CD4-positive, alpha-beta memory T cell (primary cell): ENCODE measurements at regions of chr4 and their contacts with region 1.

Region 1: DNA sequence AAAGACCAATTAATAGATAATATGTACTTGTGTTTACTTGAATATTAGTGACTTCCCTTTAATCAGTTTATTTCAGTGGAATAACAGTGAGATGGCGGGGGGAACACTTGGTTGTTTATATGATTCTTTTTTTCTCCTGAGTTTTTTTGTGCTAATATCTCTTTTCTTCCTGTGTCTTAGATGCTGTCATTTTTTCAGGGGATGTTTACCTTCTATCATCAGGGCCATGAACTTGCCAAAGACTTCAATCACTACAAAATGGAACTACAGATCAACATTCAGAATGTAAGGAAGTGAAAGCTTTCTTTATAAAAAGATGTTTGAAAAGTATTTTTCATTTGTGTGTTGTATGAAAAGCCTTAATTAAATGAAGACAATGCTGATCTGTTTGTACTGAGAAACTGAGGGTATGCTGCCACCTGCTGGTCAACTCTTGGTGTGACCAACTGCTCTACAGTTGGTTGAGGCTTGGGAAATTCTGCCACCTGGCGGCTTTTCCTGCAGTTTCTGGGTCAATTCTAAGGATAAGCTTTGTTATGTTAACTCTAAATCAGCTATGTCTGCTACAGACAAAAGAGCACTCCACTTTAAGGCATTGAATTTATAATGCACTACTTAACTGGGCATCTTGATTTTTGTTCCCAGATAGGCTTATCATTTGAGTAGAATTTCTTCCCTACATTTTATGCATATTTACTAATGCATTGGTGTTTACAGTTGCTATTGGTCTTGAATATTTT is 134.8 kb downstream of the ARHGAP10 start:
- DNase-seq: peak; percentile 83 to 89 (median 85)
- H3K4me3 ChIP-seq: no peak overlapping the region
- H3K4me3 Mint-ChIP-seq: no peak overlapping the region
- H3K27ac ChIP-seq: no peak overlapping the region
- H3K27ac Mint-ChIP-seq: peak overlapping the region in 1 of 7 donors; percentile 43
- H3K4me1 ChIP-seq: no peaks in the 10 kb centered on the region
- H3K4me1 Mint-ChIP-seq: peaks cover 0 to 2% (median 0%) of the 10 kb centered on the region in 4 donors
- H3K27me3 ChIP-seq: no peaks in the 10 kb centered on the region
- H3K27me3 Mint-ChIP-seq: no peaks in the 10 kb centered on the region

Region 2: DNA sequence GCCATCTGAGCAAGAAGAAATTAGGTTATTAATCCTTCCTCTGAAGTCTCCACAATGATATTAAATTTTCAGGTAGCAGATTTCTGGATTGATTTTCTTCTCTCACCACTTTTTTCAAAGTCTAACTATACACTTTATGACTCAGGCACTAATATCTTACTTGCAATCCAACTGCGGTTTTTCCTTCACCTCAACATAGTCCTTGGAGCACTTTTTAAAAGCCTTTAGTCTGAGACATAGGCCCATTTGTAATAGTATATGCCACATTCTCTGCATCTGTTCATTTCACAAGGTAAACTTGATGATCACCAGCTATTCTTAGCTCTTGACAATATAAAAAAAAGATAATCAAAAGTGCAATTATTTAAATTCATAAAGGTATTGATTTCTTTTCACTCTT is 441.7 kb before region 1 on chr4:
- CTCF ChIA-PET with region 1: no interaction called
- POLR2A ChIA-PET with region 1: no interaction called
- intact Hi-C with region 1: no loop called
- DNase-seq: no peak
- H3K4me3 ChIP-seq: no peak overlapping the region
- H3K4me3 Mint-ChIP-seq: no peak overlapping the region
- H3K27ac ChIP-seq: no peak overlapping the region
- H3K27ac Mint-ChIP-seq: no peak overlapping the region
- H3K4me1 ChIP-seq: no peaks in the 10 kb centered on the region
- H3K4me1 Mint-ChIP-seq: no peaks in the 10 kb centered on the region
- H3K27me3 ChIP-seq: no peaks in the 10 kb centered on the region
- H3K27me3 Mint-ChIP-seq: no peaks in the 10 kb centered on the region

Region 3: DNA sequence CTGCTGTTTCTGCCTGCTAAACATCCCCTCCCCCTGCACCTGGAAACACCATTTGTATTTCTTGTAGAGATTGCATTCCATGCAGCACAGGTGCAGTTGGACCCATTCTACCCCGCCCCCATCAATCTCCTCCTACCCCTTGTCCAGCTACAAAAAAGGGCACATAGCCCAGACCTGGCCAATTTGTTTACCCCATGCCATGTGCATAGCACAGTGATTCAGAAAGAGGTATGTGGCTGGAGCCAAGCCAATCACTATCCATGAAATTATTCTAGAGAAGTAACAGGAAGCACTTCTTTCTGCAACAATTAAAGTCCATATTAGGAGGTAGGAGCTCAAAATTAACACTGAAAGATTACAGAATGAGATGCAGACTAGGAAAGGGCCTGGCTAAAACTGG is 269.7 kb before region 1 on chr4:
- CTCF ChIA-PET with region 1: interaction called, 10 read pairs
- POLR2A ChIA-PET with region 1: no interaction called
- intact Hi-C with region 1: loop called (anchors 1 kb)
- DNase-seq: no peak
- H3K4me3 ChIP-seq: no peak overlapping the region
- H3K4me3 Mint-ChIP-seq: no peak overlapping the region
- H3K27ac ChIP-seq: no peak overlapping the region
- H3K27ac Mint-ChIP-seq: no peak overlapping the region
- H3K4me1 ChIP-seq: no peaks in the 10 kb centered on the region
- H3K4me1 Mint-ChIP-seq: peaks cover 0 to 4% (median 1%) of the 10 kb centered on the region in 4 donors
- H3K27me3 ChIP-seq: no peaks in the 10 kb centered on the region
- H3K27me3 Mint-ChIP-seq: peaks cover 2 to 3% of the 10 kb centered on the region in 2 donors

Region 4: GRCh38 chr4:147693218-147693617 is 173.5 kb before region 1 on chr4:
- CTCF ChIA-PET with region 1: interaction called, 73 read pairs
- POLR2A ChIA-PET with region 1: no interaction called
- intact Hi-C with region 1: no loop called
- DNase-seq: no peak
- H3K4me3 ChIP-seq: no peak overlapping the region
- H3K4me3 Mint-ChIP-seq: no peak overlapping the region
- H3K27ac ChIP-seq: no peak overlapping the region
- H3K27ac Mint-ChIP-seq: no peak overlapping the region
- H3K4me1 ChIP-seq: no peaks in the 10 kb centered on the region
- H3K4me1 Mint-ChIP-seq: peaks cover 0 to 5% (median 3%) of the 10 kb centered on the region in 4 donors
- H3K27me3 ChIP-seq: no peaks in the 10 kb centered on the region
- H3K27me3 Mint-ChIP-seq: peaks cover 18 to 19% of the 10 kb centered on the region in 2 donors

Region 5: DNA sequence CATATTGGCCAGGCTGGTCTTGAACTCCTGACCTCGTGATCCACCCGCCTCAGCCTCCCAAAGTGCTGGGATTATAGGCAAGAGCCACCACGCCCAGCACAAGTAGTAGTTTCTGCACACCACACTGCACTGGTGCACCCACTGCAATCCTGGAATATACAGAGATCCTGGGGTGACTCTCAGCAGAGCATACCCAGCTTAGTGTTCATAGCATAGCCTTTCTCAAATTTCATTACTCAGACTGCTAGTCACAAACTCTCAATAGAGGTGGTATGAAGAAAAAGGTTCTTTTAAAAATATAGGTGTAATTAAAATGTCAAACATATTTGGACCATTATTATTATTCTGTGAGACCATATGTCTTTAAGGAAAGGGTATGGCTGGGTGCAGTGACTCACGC is 141.0 kb before region 1 on chr4:
- CTCF ChIA-PET with region 1: interaction called, 48 read pairs
- POLR2A ChIA-PET with region 1: no interaction called
- intact Hi-C with region 1: no loop called
- DNase-seq: no peak
- H3K4me3 ChIP-seq: no peak overlapping the region
- H3K4me3 Mint-ChIP-seq: no peak overlapping the region
- H3K27ac ChIP-seq: no peak overlapping the region
- H3K27ac Mint-ChIP-seq: no peak overlapping the region
- H3K4me1 ChIP-seq: peaks cover 1% of the 10 kb centered on the region
- H3K4me1 Mint-ChIP-seq: peaks cover 0 to 6% (median 4%) of the 10 kb centered on the region in 4 donors
- H3K27me3 ChIP-seq: no peaks in the 10 kb centered on the region
- H3K27me3 Mint-ChIP-seq: no peaks in the 10 kb centered on the region

Region 6: GRCh38 chr4:147816382-147817254 is 50.1 kb before region 1 on chr4:
- CTCF ChIA-PET with region 1: interaction called, 13 read pairs
- POLR2A ChIA-PET with region 1: no interaction called
- intact Hi-C with region 1: no loop called
- DNase-seq: no peak
- H3K4me3 ChIP-seq: no peak overlapping the region
- H3K4me3 Mint-ChIP-seq: peak overlapping the region in 1 of 8 donors; percentile 40
- H3K27ac ChIP-seq: no peak overlapping the region
- H3K27ac Mint-ChIP-seq: peak overlapping the region in 4 of 7 donors; percentile 3 to 79 (median 60)
- H3K4me1 ChIP-seq: peaks cover 13% of the 10 kb centered on the region
- H3K4me1 Mint-ChIP-seq: peaks cover 11 to 23% (median 17%) of the 10 kb centered on the region in 4 donors
- H3K27me3 ChIP-seq: no peaks in the 10 kb centered on the region
- H3K27me3 Mint-ChIP-seq: no peaks in the 10 kb centered on the region

Region 7: DNA sequence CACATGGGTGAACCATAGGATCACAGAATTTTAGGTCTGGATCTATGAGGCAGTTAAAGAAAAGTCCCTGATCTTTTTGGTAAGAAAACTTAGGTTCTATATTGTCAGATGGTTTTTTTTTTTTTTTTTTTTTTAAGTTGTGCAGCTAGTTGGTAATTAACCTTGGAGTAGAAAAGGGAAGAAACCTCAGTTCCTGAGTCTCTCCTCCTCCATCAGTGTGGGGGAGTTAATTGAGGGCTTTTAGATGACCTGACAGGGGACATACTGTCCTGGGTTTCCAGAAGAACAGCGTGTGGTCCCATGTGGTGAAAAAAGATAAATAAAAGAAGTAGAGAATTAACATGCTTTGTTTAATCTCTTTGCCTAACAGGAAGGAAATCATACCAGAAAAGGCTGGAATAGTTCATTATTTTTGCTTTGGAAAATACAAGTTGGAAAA is 11.1 kb before region 1 on chr4:
- CTCF ChIA-PET with region 1: interaction called, 41 read pairs
- POLR2A ChIA-PET with region 1: no interaction called
- intact Hi-C with region 1: no loop called
- DNase-seq: no peak
- H3K4me3 ChIP-seq: no peak overlapping the region
- H3K4me3 Mint-ChIP-seq: no peak overlapping the region
- H3K27ac ChIP-seq: no peak overlapping the region
- H3K27ac Mint-ChIP-seq: no peak overlapping the region
- H3K4me1 ChIP-seq: no peaks in the 10 kb centered on the region
- H3K4me1 Mint-ChIP-seq: no peaks in the 10 kb centered on the region
- H3K27me3 ChIP-seq: no peaks in the 10 kb centered on the region
- H3K27me3 Mint-ChIP-seq: no peaks in the 10 kb centered on the region

Region 8: GRCh38 chr4:147984065-147984777 is 117.5 kb after region 1 on chr4:
- CTCF ChIA-PET with region 1: no interaction called
- POLR2A ChIA-PET with region 1: no interaction called
- intact Hi-C with region 1: no loop called
- DNase-seq: peak in 4 of 5 donors; percentile 12 to 44 (median 34)
- H3K4me3 ChIP-seq: no peak overlapping the region
- H3K4me3 Mint-ChIP-seq: no peak overlapping the region
- H3K27ac ChIP-seq: no peak overlapping the region
- H3K27ac Mint-ChIP-seq: peak overlapping the region in 3 of 7 donors; percentile 33 to 85 (median 38)
- H3K4me1 ChIP-seq: no peaks in the 10 kb centered on the region
- H3K4me1 Mint-ChIP-seq: peaks cover 17 to 36% (median 23%) of the 10 kb centered on the region in 4 donors
- H3K27me3 ChIP-seq: no peaks in the 10 kb centered on the region
- H3K27me3 Mint-ChIP-seq: no peaks in the 10 kb centered on the region

Region 9: GRCh38 chr4:148355442-148356123 is 488.9 kb after region 1 on chr4:
- CTCF ChIA-PET with region 1: no interaction called
- POLR2A ChIA-PET with region 1: no interaction called
- intact Hi-C with region 1: no loop called
- DNase-seq: peak in 2 of 5 donors; percentile 4 to 11
- H3K4me3 ChIP-seq: peak overlapping the region in 1 of 2 donors; percentile 12
- H3K4me3 Mint-ChIP-seq: peak overlapping the region; percentile 41 to 80 (median 64)
- H3K27ac ChIP-seq: no peak overlapping the region
- H3K27ac Mint-ChIP-seq: peak overlapping the region; percentile 52 to 87 (median 77)
- H3K4me1 ChIP-seq: peaks cover 32% of the 10 kb centered on the region
- H3K4me1 Mint-ChIP-seq: peaks cover 26 to 54% (median 38%) of the 10 kb centered on the region in 4 donors
- H3K27me3 ChIP-seq: no peaks in the 10 kb centered on the region
- H3K27me3 Mint-ChIP-seq: no peaks in the 10 kb centered on the region